Activated CD4-positive, alpha-beta T cell treated with anti-CD3 and anti-CD28 coated beads, Interleukin-2, amount 10 ng/mL, durations not matched to agents 7 days and 5 days (primary cell): ENCODE measurements at regions of chr7 and their contacts with region 1.

Region 1: GRCh38 chr7:7696458-7697119 is 21.8 kb downstream of the RPA3 start:
- DNase-seq: no peak
- H3K4me3 Mint-ChIP-seq: no peak overlapping the region
- H3K27ac Mint-ChIP-seq: no peak overlapping the region
- H3K4me1 Mint-ChIP-seq: peaks cover 6% of the 10 kb centered on the region
- H3K27me3 Mint-ChIP-seq: no peaks in the 10 kb centered on the region

Region 2: DNA sequence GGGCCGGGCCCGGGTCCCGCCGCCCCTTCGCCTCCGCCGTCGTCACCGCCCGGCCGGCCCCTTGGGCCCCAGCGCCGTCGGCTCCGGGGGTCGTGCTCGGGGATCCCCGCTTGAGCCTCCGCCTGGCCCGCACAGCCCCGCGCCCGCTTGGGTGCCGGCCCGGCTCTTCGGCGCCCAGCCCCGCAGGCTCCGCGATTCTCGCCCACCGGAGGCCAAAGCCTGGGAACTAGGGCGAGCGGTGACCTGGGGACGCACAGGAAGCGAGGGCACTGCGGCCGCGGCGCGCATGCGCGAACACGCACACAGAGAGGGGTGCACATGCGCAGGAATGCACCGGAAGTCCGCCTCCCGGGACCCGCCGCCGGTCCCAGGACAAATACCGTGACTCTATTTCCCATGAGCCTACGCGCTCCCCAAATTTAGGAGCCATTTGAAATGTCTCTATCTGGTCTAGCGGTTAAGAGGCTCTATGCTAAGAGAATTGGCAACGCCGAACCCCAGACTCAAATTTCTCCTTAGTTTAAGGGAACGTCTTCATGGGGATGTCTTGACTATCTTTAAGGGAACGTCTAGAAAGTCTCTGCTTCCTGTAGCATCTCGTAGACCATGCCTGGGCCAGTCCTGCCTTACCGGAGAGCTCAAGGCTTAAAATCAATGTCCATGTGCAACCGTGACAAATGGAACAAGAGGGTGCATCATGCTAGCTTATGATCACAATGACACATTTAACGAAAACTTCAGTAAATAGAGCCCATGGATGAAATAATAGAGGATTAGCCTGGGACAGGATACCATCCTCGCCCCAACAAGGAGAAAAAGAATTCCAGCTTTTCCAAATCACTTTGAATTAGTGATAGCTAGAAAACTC is 989.7 kb before region 1 on chr7 and contains the start of gene ZNF12:
- CTCF ChIA-PET with region 1: no interaction called
- POLR2A ChIA-PET with region 1: no interaction called
- DNase-seq: peak; percentile 94
- H3K4me3 Mint-ChIP-seq: peak within 1 kb of the TSS; percentile 85
- H3K27ac Mint-ChIP-seq: peak within 1 kb of the TSS; percentile 90
- H3K4me1 Mint-ChIP-seq: peaks cover 37% of the 10 kb centered on the region
- H3K27me3 Mint-ChIP-seq: no peaks in the 10 kb centered on the region
- total RNA-seq, gene ZNF12: 24.9 to 25.7 TPM

Region 3: GRCh38 chr7:7640221-7641128 is 56.1 kb before region 1 on chr7 and contains the start of gene UMAD1:
- CTCF ChIA-PET with region 1: no interaction called
- POLR2A ChIA-PET with region 1: interaction called, 11 read pairs
- DNase-seq: peak; percentile 99
- H3K4me3 Mint-ChIP-seq: peak within 1 kb of the TSS; percentile 92
- H3K27ac Mint-ChIP-seq: peak within 1 kb of the TSS; percentile 99
- H3K4me1 Mint-ChIP-seq: peaks cover 38% of the 10 kb centered on the region
- H3K27me3 Mint-ChIP-seq: no peaks in the 10 kb centered on the region
- total RNA-seq, gene UMAD1: 16.3 to 16.4 TPM

Region 4: DNA sequence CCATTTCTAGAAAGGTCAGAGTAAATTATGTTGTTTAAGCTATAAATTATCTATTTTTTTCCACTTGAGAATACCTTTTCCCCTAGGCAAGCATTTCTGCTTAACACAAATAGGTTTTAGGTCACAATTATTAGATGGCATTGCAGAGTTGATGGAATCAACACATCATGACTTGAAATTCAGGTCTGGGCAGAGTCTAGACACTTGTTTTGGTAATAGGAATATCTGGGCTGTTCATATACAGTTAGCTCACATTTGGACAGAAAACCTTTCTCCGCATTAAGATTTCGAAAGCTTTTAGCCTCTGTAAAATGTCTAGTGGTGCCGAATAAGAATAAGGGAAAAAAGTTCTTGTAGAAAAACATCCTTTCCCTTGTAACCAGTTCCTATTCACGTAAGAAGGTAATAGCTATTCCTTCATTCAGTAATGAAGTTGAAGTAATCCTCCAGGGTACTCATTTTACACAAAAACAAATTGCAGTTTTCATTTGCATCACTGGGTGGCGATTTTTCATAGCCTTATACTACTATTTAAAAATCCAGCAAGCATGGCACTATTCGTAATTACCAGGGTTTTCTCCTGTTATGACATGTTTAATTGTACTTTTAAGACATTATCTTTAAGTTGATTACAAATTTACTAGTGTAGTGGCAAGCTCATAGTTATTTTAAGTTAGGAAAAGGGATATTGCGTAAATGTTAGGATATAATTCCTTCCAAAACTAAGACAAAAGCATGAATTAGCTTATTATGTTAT is 15.2 kb before region 1 on chr7:
- CTCF ChIA-PET with region 1: interaction called, 12 read pairs
- POLR2A ChIA-PET with region 1: no interaction called
- DNase-seq: peak; percentile 67
- H3K4me3 Mint-ChIP-seq: no peak overlapping the region
- H3K27ac Mint-ChIP-seq: peak overlapping the region; percentile 16
- H3K4me1 Mint-ChIP-seq: peaks cover 20% of the 10 kb centered on the region
- H3K27me3 Mint-ChIP-seq: no peaks in the 10 kb centered on the region

Region 5: DNA sequence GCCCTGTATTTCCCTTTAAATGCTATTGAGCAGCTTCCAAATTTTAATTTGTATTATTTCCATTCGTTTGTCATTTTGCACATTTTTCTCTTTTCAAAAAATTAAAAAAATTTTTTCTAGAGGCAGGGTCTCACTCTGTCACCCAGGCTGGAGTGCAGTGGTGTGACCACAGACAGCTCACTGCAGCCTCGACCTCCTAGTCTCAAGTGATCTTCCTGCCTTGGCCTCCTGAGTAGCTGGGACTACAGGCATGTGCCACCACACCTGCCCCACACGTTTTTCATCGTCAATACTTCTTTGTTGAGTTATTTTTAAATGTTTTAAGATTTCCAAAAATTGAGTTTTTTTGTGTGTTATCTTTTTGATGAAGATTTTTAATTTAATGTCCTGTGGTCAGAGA is 17.1 kb after region 1 on chr7:
- CTCF ChIA-PET with region 1: no interaction called
- POLR2A ChIA-PET with region 1: no interaction called
- DNase-seq: no peak
- H3K4me3 Mint-ChIP-seq: no peak overlapping the region
- H3K27ac Mint-ChIP-seq: no peak overlapping the region
- H3K4me1 Mint-ChIP-seq: peaks cover 6% of the 10 kb centered on the region
- H3K27me3 Mint-ChIP-seq: no peaks in the 10 kb centered on the region

Region 6: GRCh38 chr7:7732566-7733290 is 36.1 kb after region 1 on chr7:
- CTCF ChIA-PET with region 1: no interaction called
- POLR2A ChIA-PET with region 1: no interaction called
- DNase-seq: no peak
- H3K4me3 Mint-ChIP-seq: no peak overlapping the region
- H3K27ac Mint-ChIP-seq: no peak overlapping the region
- H3K4me1 Mint-ChIP-seq: peaks cover 5% of the 10 kb centered on the region
- H3K27me3 Mint-ChIP-seq: no peaks in the 10 kb centered on the region

Region 7: DNA sequence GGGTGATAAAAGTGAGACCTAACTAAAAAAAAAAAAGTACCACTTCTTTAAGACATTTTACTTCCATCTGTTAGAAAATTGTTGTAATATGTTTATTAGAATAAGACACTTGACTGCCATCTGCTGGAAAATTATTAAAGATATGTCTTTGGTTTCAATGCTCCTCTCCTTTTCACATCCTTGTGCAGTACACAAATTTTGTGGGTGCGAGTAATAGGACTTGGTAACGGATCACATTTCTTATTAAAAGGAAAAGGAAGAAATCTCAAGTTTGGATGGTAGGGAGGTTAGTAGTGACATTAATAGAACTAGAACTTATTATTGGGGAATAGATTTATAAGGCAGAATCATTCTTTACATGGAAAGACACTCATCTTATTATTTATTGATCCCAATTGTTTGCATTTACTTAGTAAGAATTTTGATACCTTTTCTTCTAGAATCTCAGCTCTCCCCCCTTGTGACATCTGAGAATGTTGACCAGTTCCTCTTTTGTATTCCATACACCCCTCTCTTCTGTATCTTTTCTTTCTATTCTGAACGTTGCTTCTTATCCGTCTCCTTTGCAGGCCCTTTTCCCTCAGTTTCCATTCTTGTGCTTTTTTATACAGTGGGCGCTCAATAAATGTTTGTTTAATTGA is 64.9 kb after region 1 on chr7:
- CTCF ChIA-PET with region 1: no interaction called
- POLR2A ChIA-PET with region 1: no interaction called
- DNase-seq: no peak
- H3K4me3 Mint-ChIP-seq: peak overlapping the region; percentile 86
- H3K27ac Mint-ChIP-seq: peak overlapping the region; percentile 96
- H3K4me1 Mint-ChIP-seq: peaks cover 43% of the 10 kb centered on the region
- H3K27me3 Mint-ChIP-seq: no peaks in the 10 kb centered on the region